ENCODE measurements at regions of chr16 and their contacts with region 1.

Region 1: GRCh38 chr16:85514595-85515318 is 98.4 kb upstream of the GSE1 start:
- DNase-seq: peak; percentile 95 to 96
- H3K4me3 ChIP-seq: peak overlapping the region; percentile 18; the same call in 1 of the 2 replicates
- H3K4me3 Mint-ChIP-seq: peak overlapping the region; percentile 46
- H3K27ac Mint-ChIP-seq: peak overlapping the region; percentile 93
- H3K4me1 ChIP-seq: peaks cover 36% of the 10 kb centered on the region
- H3K4me1 Mint-ChIP-seq: peaks cover 33% of the 10 kb centered on the region
- H3K27me3 ChIP-seq: no peaks in the 10 kb centered on the region
- H3K27me3 Mint-ChIP-seq: no peaks in the 10 kb centered on the region
- CTCF ChIP-seq: peak; percentile 34 to 58

Region 2: DNA sequence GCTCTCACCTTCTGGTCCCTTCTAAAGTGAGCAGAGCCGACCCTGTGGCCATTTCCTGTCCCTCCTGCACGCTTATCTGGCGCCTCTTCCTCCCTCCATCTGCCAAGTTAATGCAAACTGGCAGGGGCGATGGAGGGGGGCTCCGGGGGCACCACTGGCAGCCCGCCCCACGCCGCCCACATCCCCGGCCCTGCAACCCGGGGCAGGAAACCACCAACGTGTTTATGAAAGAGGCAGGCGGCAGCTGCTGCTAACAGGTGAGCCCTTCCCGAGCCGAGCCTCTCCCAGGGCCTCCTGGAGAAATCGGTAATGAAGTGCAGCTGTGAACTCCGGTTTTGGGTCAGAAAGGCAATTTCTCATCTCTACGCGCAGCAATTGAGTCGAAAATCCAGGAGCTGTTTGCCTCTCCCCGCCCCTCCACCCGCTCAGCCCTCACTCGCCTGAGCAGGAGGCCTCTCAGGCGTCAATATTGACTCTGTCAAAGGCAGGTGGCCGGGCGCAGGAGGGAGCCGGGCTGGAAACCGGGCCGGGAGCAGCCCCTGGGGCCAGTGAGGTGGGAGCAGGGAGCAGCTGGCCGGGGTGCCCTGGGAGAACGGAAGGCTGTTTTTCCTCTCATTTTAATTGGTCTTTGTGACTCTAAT is 66.1 kb before region 1 on chr16:
- CTCF ChIA-PET with region 1: no interaction called
- POLR2A ChIA-PET with region 1: no interaction called
- intact Hi-C with region 1: loop called (anchors 1 kb)
- DNase-seq: peak; percentile 91 to 92
- H3K4me3 ChIP-seq: 0 out of 2 replicates have a peak overlapping the region, but pooled peaks have one; percentile 1
- H3K4me3 Mint-ChIP-seq: peak overlapping the region; percentile 57
- H3K27ac Mint-ChIP-seq: peak overlapping the region; percentile 77
- H3K4me1 ChIP-seq: peaks cover 45% of the 10 kb centered on the region
- H3K4me1 Mint-ChIP-seq: peaks cover 12% of the 10 kb centered on the region
- H3K27me3 ChIP-seq: no peaks in the 10 kb centered on the region
- H3K27me3 Mint-ChIP-seq: no peaks in the 10 kb centered on the region
- CTCF ChIP-seq: no peak

Region 3: DNA sequence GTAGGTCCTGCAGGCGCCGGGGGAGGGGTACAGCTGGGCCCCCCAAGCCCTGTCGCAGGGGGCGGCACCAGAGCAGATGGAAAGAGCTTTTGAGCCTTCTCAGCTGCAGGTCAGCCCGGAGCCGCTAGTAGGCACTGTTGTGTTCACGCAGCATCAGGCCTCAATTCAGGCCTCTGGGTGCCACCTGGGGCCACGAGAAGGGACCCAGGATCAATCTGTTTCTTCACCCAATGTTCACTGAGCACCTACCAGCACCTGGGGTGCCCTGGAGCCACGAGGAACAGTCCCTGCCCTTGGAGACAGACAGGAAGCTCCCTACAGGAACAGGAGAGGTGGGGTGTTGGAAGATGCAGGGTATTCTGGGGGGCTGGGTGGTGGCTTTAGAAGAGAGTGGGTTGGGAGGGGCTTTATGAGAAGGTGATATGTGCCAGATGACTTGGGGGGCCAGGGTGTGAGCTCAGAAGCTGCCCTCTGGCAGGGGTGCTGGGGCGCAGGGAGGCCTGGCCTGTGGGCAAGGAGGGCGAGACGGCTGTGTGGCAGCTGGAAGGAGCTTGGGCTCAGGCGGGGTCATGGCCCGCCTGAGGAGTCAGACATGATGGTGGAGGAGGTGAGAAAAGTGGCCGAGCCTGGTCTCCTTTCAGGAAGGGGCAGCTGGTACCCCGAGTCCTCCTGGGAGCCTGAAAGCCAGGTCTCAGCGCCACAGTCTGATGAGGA is 23.5 kb before region 1 on chr16:
- CTCF ChIA-PET with region 1: interaction called, 18 read pairs
- POLR2A ChIA-PET with region 1: interaction called, 4 read pairs
- intact Hi-C with region 1: loop called (anchors 1 kb)
- DNase-seq: peak in 1 of 2 experiments; percentile 34
- H3K4me3 ChIP-seq: no peak overlapping the region
- H3K4me3 Mint-ChIP-seq: peak overlapping the region; percentile 62
- H3K27ac Mint-ChIP-seq: peak overlapping the region; percentile 88
- H3K4me1 ChIP-seq: peaks cover 30% of the 10 kb centered on the region
- H3K4me1 Mint-ChIP-seq: peaks cover 34% of the 10 kb centered on the region
- H3K27me3 ChIP-seq: no peaks in the 10 kb centered on the region
- H3K27me3 Mint-ChIP-seq: no peaks in the 10 kb centered on the region
- CTCF ChIP-seq: peak; percentile 40 to 63

Region 4: DNA sequence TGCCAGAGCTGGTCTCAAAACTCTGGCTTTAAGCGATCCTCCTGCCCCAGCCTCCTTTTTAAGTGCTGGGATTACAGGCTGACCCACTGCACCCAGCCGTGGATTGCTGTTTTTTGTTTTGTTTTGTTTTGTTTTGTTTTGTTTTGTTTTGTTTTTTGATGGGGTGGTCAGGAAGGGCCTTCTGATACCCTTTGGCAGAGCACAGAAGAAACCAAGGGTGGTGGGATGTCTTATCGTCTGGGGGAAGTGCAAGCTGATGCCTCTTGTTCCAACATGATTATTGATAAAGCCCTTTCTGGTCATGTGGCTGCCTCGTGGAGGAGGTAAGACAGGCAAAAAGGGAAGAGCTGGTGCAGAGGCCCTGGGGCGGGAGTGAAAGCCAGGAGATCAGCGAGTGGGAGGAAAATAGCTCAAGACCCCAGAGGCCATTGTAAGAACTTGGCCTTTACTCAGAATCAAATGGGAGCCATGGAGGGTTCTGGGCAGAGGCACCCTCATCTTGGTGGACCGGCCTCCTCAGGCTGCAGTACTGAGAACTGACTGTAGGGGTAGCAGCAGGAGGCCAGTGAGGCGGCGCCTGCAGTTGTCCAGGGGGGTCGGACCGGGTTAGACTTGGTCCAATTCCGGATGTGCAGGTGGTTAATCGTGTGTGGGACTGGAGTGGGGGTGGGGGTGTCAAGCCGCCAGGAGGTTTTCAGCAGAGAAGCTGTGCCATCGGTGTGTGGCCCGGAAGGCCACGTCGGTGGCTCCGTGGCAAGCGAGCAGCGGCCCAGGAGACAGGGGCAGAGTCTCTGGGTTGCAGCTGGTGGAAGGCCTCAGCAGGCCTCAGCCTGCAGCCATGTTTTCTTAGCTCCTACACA is 14.0 kb after region 1 on chr16:
- CTCF ChIA-PET with region 1: interaction called, 5 read pairs
- POLR2A ChIA-PET with region 1: no interaction called
- intact Hi-C with region 1: loop called (anchors 1 kb)
- DNase-seq: peak in 1 of 2 experiments; percentile 67
- H3K4me3 ChIP-seq: no peak overlapping the region
- H3K4me3 Mint-ChIP-seq: no peak overlapping the region
- H3K27ac Mint-ChIP-seq: peak overlapping the region; percentile 13
- H3K4me1 ChIP-seq: peaks cover 70% of the 10 kb centered on the region
- H3K4me1 Mint-ChIP-seq: peaks cover 35% of the 10 kb centered on the region
- H3K27me3 ChIP-seq: no peaks in the 10 kb centered on the region
- H3K27me3 Mint-ChIP-seq: no peaks in the 10 kb centered on the region
- CTCF ChIP-seq: peak; percentile 58 to 61

Region 5: DNA sequence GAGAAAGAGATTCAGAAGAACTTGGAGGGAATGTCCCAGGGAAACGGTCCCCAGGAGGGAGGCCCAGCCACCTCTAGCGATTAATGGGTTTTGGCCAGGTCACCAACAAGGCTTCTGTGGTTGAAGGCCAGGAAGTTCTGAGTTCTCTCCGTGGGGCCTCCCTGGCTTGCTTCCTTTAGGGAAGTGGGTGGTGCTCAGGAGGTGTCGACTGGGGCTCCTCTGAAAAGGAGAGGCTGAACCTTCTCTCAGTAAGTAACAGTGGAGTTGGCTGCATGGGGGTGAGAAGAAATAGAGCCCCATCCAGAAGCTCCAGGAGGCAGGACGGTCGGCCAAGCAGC is 21.3 kb after region 1 on chr16:
- CTCF ChIA-PET with region 1: interaction called, 14 read pairs
- POLR2A ChIA-PET with region 1: interaction called, 3 read pairs
- intact Hi-C with region 1: loop called (anchors 1 kb)
- DNase-seq: no peak
- H3K4me3 ChIP-seq: no peak overlapping the region
- H3K4me3 Mint-ChIP-seq: peak overlapping the region; percentile 58
- H3K27ac Mint-ChIP-seq: peak overlapping the region; percentile 97
- H3K4me1 ChIP-seq: peaks cover 40% of the 10 kb centered on the region
- H3K4me1 Mint-ChIP-seq: peaks cover 34% of the 10 kb centered on the region
- H3K27me3 ChIP-seq: no peaks in the 10 kb centered on the region
- H3K27me3 Mint-ChIP-seq: no peaks in the 10 kb centered on the region
- CTCF ChIP-seq: no peak